Posterior vena cava (tissue), 2 donors: ENCODE measurements at regions of chr10 and their contacts with region 1.

Region 1: GRCh38 chr10:48890888-48891850 is 48.5 kb downstream of the LRRC18 start:
- DNase-seq: no peak

Region 2: GRCh38 chr10:49254556-49255318 is 363.6 kb after region 1 on chr10:
- intact Hi-C with region 1: loop called in 1 of 2 experiments (anchors 10 kb)
- DNase-seq: no peak